Activated CD4-positive, alpha-beta memory T cell treated with anti-CD3 and anti-CD28 coated beads for 36 hours (primary cell): ENCODE measurements at regions of chr1 and their contacts with region 1.

Region 1: DNA sequence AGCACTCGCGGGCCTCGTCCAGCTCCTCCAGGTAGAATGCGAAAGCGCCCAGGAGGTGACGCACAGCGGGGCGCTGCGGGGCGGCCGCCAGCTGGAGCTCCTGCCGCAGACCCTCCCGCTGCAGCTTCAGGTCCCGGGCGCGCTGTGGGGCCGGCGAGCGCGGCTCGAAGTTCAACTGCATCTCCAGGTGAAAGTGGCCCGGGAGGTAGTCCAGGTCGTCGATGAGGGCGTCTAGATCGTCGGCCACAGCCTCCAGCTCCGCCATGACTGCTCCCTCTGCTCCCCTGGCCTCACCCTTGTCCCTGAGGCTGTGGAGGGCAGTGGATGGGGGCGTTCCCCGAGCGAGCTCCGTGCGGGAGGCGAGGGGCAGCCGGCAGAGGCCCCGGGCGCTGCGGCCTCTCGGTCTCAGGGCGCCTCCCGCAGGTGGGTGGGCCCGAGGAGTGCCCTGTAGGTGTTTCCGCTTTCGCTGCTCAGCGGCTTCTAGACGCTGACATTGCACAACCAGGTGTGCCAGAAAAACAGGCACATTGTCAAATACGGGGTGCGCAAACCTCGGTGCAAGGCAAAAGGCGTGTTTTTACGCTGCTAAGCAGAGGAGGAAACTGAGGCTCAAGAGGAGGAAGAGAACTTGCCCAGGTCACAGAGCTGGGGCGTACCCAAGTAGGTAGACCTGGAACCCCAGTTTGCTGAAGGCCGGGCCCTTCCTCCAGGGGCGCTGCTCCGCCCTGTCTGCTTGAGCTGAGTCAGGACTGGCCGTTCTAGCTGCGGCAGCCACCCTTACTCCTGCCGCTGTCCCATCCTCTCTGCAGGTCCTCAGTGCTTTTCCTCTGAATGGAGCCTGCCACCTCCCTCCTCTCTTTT is at the start of gene TTC22:
- DNase-seq: peak; percentile 86
- H3K4me3 Mint-ChIP-seq: peak within 1 kb of the TSS; percentile 84
- H3K27ac Mint-ChIP-seq: peak within 1 kb of the TSS; percentile 67
- H3K4me1 Mint-ChIP-seq: peaks cover 56% of the 10 kb centered on the region
- H3K27me3 Mint-ChIP-seq: no peaks in the 10 kb centered on the region
- total RNA-seq, gene TTC22: 4.6 to 5.3 TPM

Region 2: GRCh38 chr1:54764133-54764921 is 36.8 kb before region 1 on chr1 and contains the start of gene PARS2:
- CTCF ChIA-PET with region 1: interaction called, 38 read pairs
- POLR2A ChIA-PET with region 1: interaction called, 4 read pairs
- intact Hi-C with region 1: loop called (anchors 1 kb)
- DNase-seq: peak; percentile 97
- H3K4me3 Mint-ChIP-seq: peak within 1 kb of the TSS; percentile 93
- H3K27ac Mint-ChIP-seq: peak within 1 kb of the TSS; percentile 78
- H3K4me1 Mint-ChIP-seq: peaks cover 12% of the 10 kb centered on the region
- H3K27me3 Mint-ChIP-seq: no peaks in the 10 kb centered on the region
- total RNA-seq, gene PARS2: 5.6 to 5.7 TPM

Region 3: DNA sequence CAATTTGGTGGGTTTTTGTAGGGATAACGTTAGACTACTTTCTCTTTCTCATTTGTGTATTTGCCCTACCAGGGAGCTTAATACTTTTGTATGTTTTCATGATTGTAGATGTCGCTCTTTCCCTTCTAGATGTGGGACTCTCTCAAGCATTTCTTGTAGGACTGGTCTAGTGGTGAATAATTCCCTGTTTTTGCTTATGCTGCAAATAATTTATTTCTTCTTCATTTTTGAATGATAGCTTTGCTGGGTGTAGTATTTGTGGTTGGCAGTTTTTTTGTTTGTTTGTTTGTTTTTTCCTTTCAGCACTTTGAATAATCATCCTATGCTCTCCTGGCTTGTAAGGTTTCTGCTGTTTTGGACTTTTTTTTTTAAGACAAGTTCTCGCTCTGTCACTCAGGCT is 22.5 kb after region 1 on chr1:
- CTCF ChIA-PET with region 1: no interaction called
- POLR2A ChIA-PET with region 1: no interaction called
- intact Hi-C with region 1: no loop called
- DNase-seq: no peak
- H3K4me3 Mint-ChIP-seq: no peak overlapping the region
- H3K27ac Mint-ChIP-seq: no peak overlapping the region
- H3K4me1 Mint-ChIP-seq: no peaks in the 10 kb centered on the region
- H3K27me3 Mint-ChIP-seq: no peaks in the 10 kb centered on the region

Region 4: DNA sequence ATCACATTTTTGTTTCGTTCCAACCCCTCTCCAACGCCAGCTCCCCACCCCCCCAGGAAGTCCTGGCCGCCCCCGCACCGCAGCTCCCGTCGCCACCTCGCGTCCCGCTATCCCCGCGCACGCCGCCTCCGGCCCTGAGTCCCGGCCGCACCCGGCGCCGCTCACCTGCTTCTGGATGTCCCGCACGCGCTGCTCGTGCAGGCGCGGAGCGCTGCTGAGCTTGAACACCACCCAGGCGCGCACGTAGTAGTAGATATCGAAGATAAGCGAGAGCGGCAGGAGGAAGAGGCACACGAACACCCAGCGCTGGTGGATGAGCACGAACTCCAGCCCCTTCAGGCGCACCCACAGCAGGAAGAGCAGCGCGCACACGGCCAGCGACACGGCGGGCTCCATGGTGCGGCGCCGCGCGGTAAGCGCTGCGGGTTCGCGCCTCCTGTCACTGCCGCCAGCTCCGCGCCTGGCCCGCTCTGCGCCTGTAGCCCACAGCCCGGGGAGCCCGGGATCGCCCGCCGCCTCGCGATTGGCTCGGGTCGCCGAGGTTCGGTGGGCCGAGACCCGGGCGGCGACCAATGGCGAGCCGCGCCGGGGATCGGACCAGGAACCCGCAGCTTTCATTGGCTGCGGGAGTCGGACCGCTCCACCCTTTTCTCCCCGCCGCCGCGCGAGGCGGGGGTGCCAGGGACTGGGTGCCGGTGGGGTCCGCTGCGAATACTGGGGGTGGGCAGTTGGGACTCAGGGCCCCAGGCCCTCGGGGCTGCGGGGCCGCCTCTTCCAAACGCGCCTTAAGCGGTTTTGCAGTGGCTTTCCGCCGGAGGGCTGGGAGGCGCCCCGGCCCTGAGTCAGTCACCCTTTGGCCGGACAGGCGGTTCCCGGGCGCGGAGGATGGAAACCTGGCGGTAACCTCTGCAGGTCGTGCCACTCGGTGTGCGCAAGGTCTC is 85.9 kb after region 1 on chr1 and contains the start of gene DHCR24:
- CTCF ChIA-PET with region 1: interaction called, 4 read pairs
- POLR2A ChIA-PET with region 1: no interaction called
- intact Hi-C with region 1: loop called (anchors 2 kb)
- DNase-seq: peak; percentile 83
- H3K4me3 Mint-ChIP-seq: peak within 1 kb of the TSS; percentile 92
- H3K27ac Mint-ChIP-seq: peak within 1 kb of the TSS; percentile 84
- H3K4me1 Mint-ChIP-seq: peaks cover 47% of the 10 kb centered on the region
- H3K27me3 Mint-ChIP-seq: peaks cover 2% of the 10 kb centered on the region
- total RNA-seq, gene DHCR24: 72.6 to 75.1 TPM